SK-N-SH (cell line): ENCODE measurements at regions of chr2 and their contacts with region 1.

Region 1: GRCh38 chr2:105235388-105236054 is 6.0 kb upstream of the GPR45 start:
- DNase-seq: peak; percentile 72
- H3K4me3 ChIP-seq: peak overlapping the region in 1 of 2 experiments; percentile 17; a peak in 2 of 4 replicates
- H3K27ac ChIP-seq: peak overlapping the region in 1 of 2 experiments; percentile 81; a peak in 2 of 4 replicates
- H3K4me1 ChIP-seq: peaks cover 0 to 20% of the 10 kb centered on the region in 2 experiments; a peak in 3 of 4 replicates
- H3K27me3 ChIP-seq: no peaks in the 10 kb centered on the region
- CTCF ChIP-seq: peak; percentile 87
- EP300 ChIP-seq: no peak
- RAD21 ChIP-seq: peak; percentile 82

Region 2: DNA sequence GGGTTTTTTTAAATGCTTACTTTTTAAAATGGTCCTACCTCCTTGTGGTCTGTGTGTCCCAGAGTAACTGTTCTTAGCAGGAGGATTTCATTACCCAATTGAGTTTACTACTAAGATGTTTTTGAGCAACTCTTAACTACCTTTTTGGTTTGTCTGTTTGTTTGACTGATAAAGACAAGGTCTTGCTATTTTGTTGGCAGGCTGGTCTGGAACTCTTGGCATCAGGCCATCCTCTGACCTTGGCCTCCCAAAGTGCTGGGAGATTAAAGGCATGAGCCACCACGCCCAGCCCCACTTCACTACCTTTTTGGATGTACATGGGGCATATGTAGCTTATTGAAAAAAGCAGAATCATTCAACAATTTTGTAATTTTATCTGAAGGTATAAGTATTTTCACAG is 182.7 kb before region 1 on chr2:
- CTCF ChIA-PET with region 1: no interaction called
- POLR2A ChIA-PET with region 1: no interaction called
- DNase-seq: no peak
- H3K4me3 ChIP-seq: no peak overlapping the region
- H3K27ac ChIP-seq: no peak overlapping the region
- H3K4me1 ChIP-seq: no peaks in the 10 kb centered on the region; a peak in 1 of 4 replicates
- H3K27me3 ChIP-seq: no peaks in the 10 kb centered on the region
- CTCF ChIP-seq: no peak
- EP300 ChIP-seq: no peak
- RAD21 ChIP-seq: no peak

Region 3: GRCh38 chr2:105102963-105103421 is 132.5 kb before region 1 on chr2:
- CTCF ChIA-PET with region 1: interaction called, 24 read pairs
- POLR2A ChIA-PET with region 1: no interaction called
- DNase-seq: no peak
- H3K4me3 ChIP-seq: no peak overlapping the region
- H3K27ac ChIP-seq: 0 out of 4 replicates have a peak overlapping the region, but pooled peaks of 1 of the 2 experiments have one; percentile 57
- H3K4me1 ChIP-seq: no peaks in the 10 kb centered on the region; a peak in 1 of 4 replicates
- H3K27me3 ChIP-seq: no peaks in the 10 kb centered on the region
- CTCF ChIP-seq: no peak
- EP300 ChIP-seq: peak in 1 of 2 experiments; percentile 65; a peak in 1 of 4 replicates
- RAD21 ChIP-seq: no peak

Region 4: GRCh38 chr2:105143467-105144151 is 91.9 kb before region 1 on chr2:
- CTCF ChIA-PET with region 1: interaction called, 17 read pairs
- POLR2A ChIA-PET with region 1: no interaction called
- DNase-seq: peak; percentile 90
- H3K4me3 ChIP-seq: peak overlapping the region; percentile 8 to 49; a peak in 3 of 4 replicates
- H3K27ac ChIP-seq: no peak overlapping the region; a peak in 1 of 4 replicates
- H3K4me1 ChIP-seq: peaks cover 0 to 10% of the 10 kb centered on the region in 2 experiments; a peak in 1 of 4 replicates
- H3K27me3 ChIP-seq: peaks cover 18% of the 10 kb centered on the region; the same call in 1 of the 2 replicates
- CTCF ChIP-seq: no peak
- EP300 ChIP-seq: no peak
- RAD21 ChIP-seq: no peak

Region 5: GRCh38 chr2:105220604-105221003 is 14.9 kb before region 1 on chr2:
- CTCF ChIA-PET with region 1: interaction called, 33 read pairs
- POLR2A ChIA-PET with region 1: no interaction called
- DNase-seq: peak; percentile 65
- H3K4me3 ChIP-seq: no peak overlapping the region
- H3K27ac ChIP-seq: peak overlapping the region in 1 of 2 experiments; percentile 83; a peak in 2 of 4 replicates
- H3K4me1 ChIP-seq: peaks cover 0 to 18% of the 10 kb centered on the region in 2 experiments; a peak in 2 of 4 replicates
- H3K27me3 ChIP-seq: no peaks in the 10 kb centered on the region; the same call in 1 of the 2 replicates
- CTCF ChIP-seq: no peak
- EP300 ChIP-seq: peak in 1 of 2 experiments; percentile 83; a peak in 2 of 4 replicates
- RAD21 ChIP-seq: no peak

Region 6: DNA sequence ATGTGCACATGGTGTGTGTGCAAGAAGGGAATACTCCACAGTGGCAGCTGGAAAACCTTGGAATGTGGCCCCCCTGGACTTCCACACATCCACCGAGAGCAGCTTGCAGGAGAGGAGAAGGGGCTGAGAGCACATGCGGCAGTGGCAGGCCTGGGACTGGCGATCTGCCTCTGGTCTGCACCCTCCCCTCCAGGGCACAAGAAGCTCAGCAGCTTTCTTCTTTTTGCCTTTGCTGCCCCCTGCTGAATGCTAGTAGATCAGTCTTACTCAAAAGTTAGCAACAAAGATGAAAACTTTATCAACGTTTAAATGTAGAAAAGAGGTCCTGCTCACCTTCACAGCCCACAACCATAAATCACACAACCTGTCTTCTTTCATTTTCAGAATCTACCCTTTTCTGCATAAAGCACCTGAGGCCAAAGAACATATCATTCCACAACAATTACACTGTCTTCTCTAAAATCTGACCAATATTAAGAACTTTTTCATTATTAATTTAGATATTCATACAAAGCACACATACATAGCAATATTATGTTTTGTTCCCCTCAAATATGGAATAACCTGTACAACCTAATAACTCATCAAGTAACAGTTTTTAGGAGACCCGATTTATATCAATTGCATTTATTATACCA is 59.4 kb after region 1 on chr2:
- CTCF ChIA-PET with region 1: interaction called, 13 read pairs
- POLR2A ChIA-PET with region 1: no interaction called
- DNase-seq: peak; percentile 82
- H3K4me3 ChIP-seq: no peak overlapping the region
- H3K27ac ChIP-seq: no peak overlapping the region
- H3K4me1 ChIP-seq: peaks cover 0 to 3% of the 10 kb centered on the region in 2 experiments; a peak in 1 of 4 replicates
- H3K27me3 ChIP-seq: no peaks in the 10 kb centered on the region
- CTCF ChIP-seq: peak; percentile 73
- EP300 ChIP-seq: no peak
- RAD21 ChIP-seq: peak; percentile 82